Cardiac septum (tissue), 1 donor: ENCODE measurements at regions of chr5 and their contacts with region 1.

Region 1: GRCh38 chr5:61933787-61934626 is 372.0 kb upstream of the KIF2A start:
- DNase-seq: no peak

Region 2: GRCh38 chr5:60668686-60669304 is 1265.2 kb before region 1 on chr5:
- intact Hi-C with region 1: loop called (anchors 5 kb)
- DNase-seq: no peak

Region 3: DNA sequence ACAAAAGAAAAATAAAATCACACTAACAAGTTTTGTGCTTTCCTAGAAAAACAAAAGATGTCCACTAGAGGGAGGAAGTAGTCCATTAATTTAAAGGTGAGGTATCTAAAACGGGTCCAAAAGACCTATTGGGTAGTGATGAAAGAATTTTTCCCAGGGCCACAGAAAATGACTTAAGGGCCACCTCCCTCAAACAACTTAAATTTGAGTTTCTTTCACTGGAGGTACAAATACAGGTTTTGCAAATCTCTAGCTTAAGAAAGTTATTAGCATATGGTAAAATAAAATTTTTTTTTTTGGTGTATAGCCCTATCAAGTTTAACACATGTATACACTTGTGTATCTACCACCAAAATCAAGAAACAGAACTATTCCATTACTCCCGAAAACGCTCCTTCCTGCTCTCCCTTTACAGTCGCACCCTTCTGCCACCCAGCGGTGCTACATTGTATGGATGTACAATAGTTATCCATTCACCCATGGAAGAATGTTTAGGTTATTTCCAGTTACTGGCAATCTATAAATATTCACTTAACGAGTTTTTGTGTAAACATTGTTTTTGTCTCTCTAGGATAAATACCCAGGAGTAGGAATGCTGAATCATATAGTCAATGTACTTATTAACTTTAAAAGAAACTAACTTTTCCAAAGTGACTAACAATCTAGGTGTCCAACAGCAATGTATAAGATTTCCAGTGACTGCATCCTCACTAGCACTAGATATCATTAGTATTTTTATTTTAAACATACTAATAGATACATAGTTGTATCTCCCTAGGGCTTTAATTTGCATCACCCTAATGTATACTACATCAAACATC is 1256.0 kb before region 1 on chr5:
- intact Hi-C with region 1: loop called (anchors 5 kb)
- DNase-seq: no peak

Region 4: DNA sequence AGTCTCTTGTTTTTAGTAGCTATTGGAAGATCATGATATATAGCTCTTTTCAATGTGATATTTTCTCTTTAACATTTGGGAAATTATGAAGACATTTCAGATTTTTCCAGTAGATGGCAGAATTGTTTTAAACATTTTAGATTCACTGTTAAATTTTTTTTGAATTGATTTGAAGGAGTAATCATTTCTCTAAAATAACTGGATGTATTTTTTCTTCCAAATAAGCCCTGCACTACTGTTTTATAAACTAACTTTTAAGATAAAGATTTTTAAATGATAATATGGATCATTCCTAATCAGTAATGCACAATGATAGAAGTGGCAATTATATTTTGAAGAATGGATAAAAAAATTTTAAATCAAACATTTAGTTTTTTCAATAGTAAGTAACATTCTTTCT is 974.9 kb before region 1 on chr5:
- intact Hi-C with region 1: loop called (anchors 10 kb)
- DNase-seq: no peak

Region 5: DNA sequence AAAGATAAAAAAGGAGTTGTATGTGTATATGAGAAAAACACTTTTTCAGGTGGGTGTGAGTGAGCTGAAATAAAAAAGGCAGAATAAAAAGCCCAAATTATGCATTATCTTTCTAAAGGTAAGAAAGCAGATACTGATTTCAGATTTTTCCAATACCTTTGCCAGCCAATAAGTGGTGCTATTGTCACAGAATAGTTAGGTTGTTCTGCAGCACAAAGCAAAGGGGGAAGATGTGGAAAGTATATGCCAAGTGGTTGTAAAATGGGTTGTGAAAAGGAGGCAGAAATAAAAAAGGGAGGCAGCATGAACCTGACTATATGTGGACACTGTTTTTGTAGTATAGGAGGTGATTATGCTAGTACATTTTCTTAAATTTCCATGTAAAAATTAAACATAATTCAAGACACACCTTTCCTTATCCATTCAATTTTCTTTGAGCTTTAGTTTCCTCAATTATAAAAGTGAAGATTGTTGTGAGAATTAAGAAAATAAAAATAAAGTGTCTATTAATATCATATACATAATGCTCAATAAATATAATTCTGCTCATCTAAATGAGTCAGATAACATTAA is 878.5 kb before region 1 on chr5:
- intact Hi-C with region 1: loop called (anchors 10 kb)
- DNase-seq: no peak